ENCODE measurements at regions of chr11 and their contacts with region 1.

Region 1: GRCh38 chr11:116641561-116642045 is 131.2 kb downstream of the BUD13 start:
- DNase-seq: peak; percentile 39 to 92
- H3K4me3 ChIP-seq: no peak overlapping the region
- H3K27ac ChIP-seq: no peak overlapping the region
- H3K4me1 ChIP-seq: peaks cover 0 to 9% (median 2%) of the 10 kb centered on the region in 4 experiments; a peak in 5 of 7 replicates
- H3K27me3 ChIP-seq: 0 out of 7 replicates have a peak, but pooled peaks cover 0 to 3% (median 0%) of the 10 kb centered on the region in 4 experiments
- CTCF ChIP-seq: peak; percentile 95 to 100 (median 97)
- EP300 ChIP-seq: no peak
- POLR2A ChIP-seq: no peak
- RAD21 ChIP-seq: peak; percentile 97 to 98

Region 2: GRCh38 chr11:116454020-116454645 is 187.5 kb before region 1 on chr11:
- CTCF ChIA-PET with region 1: interaction called, 25 read pairs
- POLR2A ChIA-PET with region 1: no interaction called
- DNase-seq: peak in 1 of 2 experiments; percentile 78
- H3K4me3 ChIP-seq: no peak overlapping the region
- H3K27ac ChIP-seq: no peak overlapping the region
- H3K4me1 ChIP-seq: peaks cover 0 to 11% (median 1%) of the 10 kb centered on the region in 4 experiments; a peak in 3 of 7 replicates
- H3K27me3 ChIP-seq: no peaks in the 10 kb centered on the region
- CTCF ChIP-seq: peak; percentile 75 to 84 (median 81)
- EP300 ChIP-seq: no peak
- POLR2A ChIP-seq: no peak
- RAD21 ChIP-seq: peak; percentile 70 to 87

Region 3: GRCh38 chr11:116525961-116526495 is 115.6 kb before region 1 on chr11:
- CTCF ChIA-PET with region 1: interaction called, 47 read pairs
- POLR2A ChIA-PET with region 1: no interaction called
- DNase-seq: no peak
- H3K4me3 ChIP-seq: no peak overlapping the region
- H3K27ac ChIP-seq: no peak overlapping the region
- H3K4me1 ChIP-seq: no peaks in the 10 kb centered on the region
- H3K27me3 ChIP-seq: peaks cover 0 to 3% (median 0%) of the 10 kb centered on the region in 4 experiments; a peak in 1 of 7 replicates
- CTCF ChIP-seq: no peak
- EP300 ChIP-seq: no peak
- POLR2A ChIP-seq: no peak
- RAD21 ChIP-seq: no peak

Region 4: DNA sequence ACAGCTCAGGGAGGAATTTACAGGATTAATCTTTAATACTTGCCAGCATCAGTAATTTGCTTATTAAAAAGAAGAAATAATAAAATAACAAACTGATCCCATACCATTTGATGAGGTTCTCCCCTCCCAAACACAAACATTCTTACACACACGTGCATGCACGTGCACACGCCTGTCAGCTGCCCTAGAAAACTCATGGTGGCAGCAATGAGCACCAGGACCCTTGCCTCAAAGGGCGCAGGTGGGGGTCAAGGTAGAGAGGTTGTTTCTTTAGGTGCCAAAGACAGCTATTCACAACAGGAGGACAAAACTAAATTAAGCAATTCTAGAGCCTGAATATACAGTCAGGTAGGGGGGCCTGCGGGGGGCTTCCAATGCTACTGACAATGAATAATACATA is 88.1 kb before region 1 on chr11:
- CTCF ChIA-PET with region 1: interaction called, 21 read pairs
- POLR2A ChIA-PET with region 1: no interaction called
- DNase-seq: no peak
- H3K4me3 ChIP-seq: no peak overlapping the region
- H3K27ac ChIP-seq: no peak overlapping the region
- H3K4me1 ChIP-seq: no peaks in the 10 kb centered on the region
- H3K27me3 ChIP-seq: peaks cover 0 to 2% (median 0%) of the 10 kb centered on the region in 4 experiments; a peak in 2 of 7 replicates
- CTCF ChIP-seq: peak in 2 of 3 experiments; percentile 24 to 36; a peak in 3 of 4 replicates
- EP300 ChIP-seq: no peak
- POLR2A ChIP-seq: no peak
- RAD21 ChIP-seq: peak; percentile 22 to 42; a peak in 3 of 4 replicates

Region 5: GRCh38 chr11:116605543-116606459 is 35.8 kb before region 1 on chr11:
- CTCF ChIA-PET with region 1: interaction called, 22 read pairs
- POLR2A ChIA-PET with region 1: no interaction called
- DNase-seq: peak; percentile 58 to 96
- H3K4me3 ChIP-seq: no peak overlapping the region
- H3K27ac ChIP-seq: no peak overlapping the region
- H3K4me1 ChIP-seq: no peaks in the 10 kb centered on the region
- H3K27me3 ChIP-seq: no peaks in the 10 kb centered on the region
- CTCF ChIP-seq: peak; percentile 81 to 93 (median 86)
- EP300 ChIP-seq: no peak
- POLR2A ChIP-seq: no peak
- RAD21 ChIP-seq: peak; percentile 69 to 79

Region 6: GRCh38 chr11:116657842-116658825 is 16.5 kb after region 1 on chr11:
- CTCF ChIA-PET with region 1: interaction called, 37 read pairs
- POLR2A ChIA-PET with region 1: interaction called, 3 read pairs
- DNase-seq: no peak
- H3K4me3 ChIP-seq: no peak overlapping the region
- H3K27ac ChIP-seq: no peak overlapping the region
- H3K4me1 ChIP-seq: peaks cover 0 to 5% (median 0%) of the 10 kb centered on the region in 4 experiments; a peak in 1 of 7 replicates
- H3K27me3 ChIP-seq: no peaks in the 10 kb centered on the region
- CTCF ChIP-seq: peak; percentile 7 to 40 (median 23); a peak in 3 of 4 replicates
- EP300 ChIP-seq: no peak
- POLR2A ChIP-seq: no peak
- RAD21 ChIP-seq: peak in 1 of 2 experiments; percentile 7; a peak in 1 of 4 replicates

Region 7: DNA sequence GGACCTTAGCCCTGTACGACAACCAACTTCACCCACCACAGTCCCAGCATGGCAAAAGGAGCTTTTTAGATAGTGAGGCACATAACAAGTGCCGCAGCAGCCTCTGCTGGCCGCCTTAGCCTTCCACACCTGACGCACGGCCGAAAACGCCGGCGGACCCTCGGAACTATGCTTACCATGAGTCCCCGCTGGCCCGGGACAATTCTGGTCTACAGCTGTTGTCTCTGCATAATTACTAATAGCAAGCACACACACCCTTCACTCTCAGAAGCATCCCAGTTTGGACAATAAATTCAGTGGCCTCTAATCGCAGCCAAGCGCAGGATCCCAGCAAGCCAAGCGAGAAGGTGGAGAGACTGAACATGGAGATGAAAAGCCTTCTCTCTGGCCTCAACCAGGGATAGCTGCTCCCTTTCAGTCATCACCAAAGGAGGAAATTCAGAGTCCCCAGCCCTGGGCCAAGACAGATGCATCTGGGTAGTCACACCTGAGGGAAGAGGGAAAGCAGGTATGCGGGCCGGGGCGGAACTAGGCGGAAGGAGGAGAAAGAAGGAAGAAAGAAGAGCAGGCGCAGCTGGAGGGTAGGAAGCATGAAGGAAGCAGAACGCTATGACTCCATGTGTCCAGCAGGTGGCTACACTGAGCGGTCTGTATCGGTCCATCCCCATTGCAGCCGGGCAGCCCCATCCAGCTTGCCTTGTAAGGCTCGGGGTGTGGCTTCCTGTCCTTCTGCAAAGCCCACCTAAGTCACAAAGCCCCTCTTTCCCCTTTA is 90.9 kb after region 1 on chr11:
- CTCF ChIA-PET with region 1: interaction called, 28 read pairs
- POLR2A ChIA-PET with region 1: no interaction called
- DNase-seq: peak; percentile 62 to 87
- H3K4me3 ChIP-seq: peak overlapping the region; percentile 2 to 51 (median 15); a peak in 5 of 8 replicates
- H3K27ac ChIP-seq: no peak overlapping the region
- H3K4me1 ChIP-seq: peaks cover 6 to 23% (median 16%) of the 10 kb centered on the region in 4 experiments
- H3K27me3 ChIP-seq: no peaks in the 10 kb centered on the region
- CTCF ChIP-seq: peak; percentile 84 to 98 (median 97)
- EP300 ChIP-seq: no peak
- POLR2A ChIP-seq: no peak
- RAD21 ChIP-seq: peak; percentile 74 to 76